Naive thymus-derived CD4-positive, alpha-beta T cell (primary cell): ENCODE measurements at regions of chrX and their contacts with region 1.

Region 1: DNA sequence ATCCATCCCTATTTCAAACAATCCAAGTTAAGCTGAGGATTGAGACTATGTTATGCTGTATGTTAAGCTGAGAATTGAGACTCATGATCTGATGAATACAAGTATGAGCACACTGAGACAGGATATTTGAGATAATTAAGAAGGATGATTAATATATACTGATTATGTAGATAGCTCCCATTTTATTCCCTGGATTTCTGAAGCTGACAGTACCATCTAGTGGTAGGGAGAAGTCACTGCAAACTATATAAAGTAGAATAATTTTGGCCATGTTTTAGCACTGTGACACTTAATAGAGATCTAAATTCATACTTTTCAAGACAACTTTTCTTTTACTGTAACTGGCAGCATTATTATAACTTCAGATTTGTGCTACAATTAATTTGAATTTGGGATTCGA is 63.8 kb upstream of the HPRT1 start:
- DNase-seq: peak in 2 of 9 donors; percentile 1 to 18
- ATAC-seq: no peak
- H3K4me3 ChIP-seq: no peak overlapping the region
- H3K4me3 Mint-ChIP-seq: no peak overlapping the region
- H3K27ac ChIP-seq: no peak overlapping the region
- H3K27ac Mint-ChIP-seq: no peak overlapping the region
- H3K4me1 ChIP-seq: no peaks in the 10 kb centered on the region
- H3K4me1 Mint-ChIP-seq: peaks cover 0 to 15% (median 5%) of the 10 kb centered on the region in 7 donors
- H3K27me3 ChIP-seq: no peaks in the 10 kb centered on the region
- H3K27me3 Mint-ChIP-seq: no peaks in the 10 kb centered on the region

Region 2: GRCh38 chrX:133921764-133922389 is 474.3 kb before region 1 on chrX:
- CTCF ChIA-PET with region 1: no interaction called
- POLR2A ChIA-PET with region 1: no interaction called
- intact Hi-C with region 1: loop called in 1 of 2 experiments (anchors 5 kb)
- DNase-seq: peak in 5 of 9 donors; percentile 7 to 33 (median 22)
- ATAC-seq: no peak
- H3K4me3 ChIP-seq: peak overlapping the region; percentile 24
- H3K4me3 Mint-ChIP-seq: peak overlapping the region in 5 of 10 donors; percentile 7 to 90 (median 83)
- H3K27ac ChIP-seq: no peak overlapping the region
- H3K27ac Mint-ChIP-seq: peak overlapping the region in 7 of 9 donors; percentile 38 to 95 (median 92)
- H3K4me1 ChIP-seq: peaks cover 13 to 17% of the 10 kb centered on the region in 2 donors
- H3K4me1 Mint-ChIP-seq: peaks cover 4 to 39% (median 26%) of the 10 kb centered on the region in 7 donors
- H3K27me3 ChIP-seq: no peaks in the 10 kb centered on the region
- H3K27me3 Mint-ChIP-seq: no peaks in the 10 kb centered on the region

Region 3: GRCh38 chrX:134377537-134377936 is 18.6 kb before region 1 on chrX:
- CTCF ChIA-PET with region 1: interaction called, 5 read pairs
- POLR2A ChIA-PET with region 1: no interaction called
- intact Hi-C with region 1: loop called (anchors 1 kb)
- DNase-seq: peak in 1 of 9 donors; percentile 9
- ATAC-seq: no peak
- H3K4me3 ChIP-seq: no peak overlapping the region
- H3K4me3 Mint-ChIP-seq: no peak overlapping the region
- H3K27ac ChIP-seq: no peak overlapping the region
- H3K27ac Mint-ChIP-seq: no peak overlapping the region
- H3K4me1 ChIP-seq: peaks cover 2 to 4% of the 10 kb centered on the region in 2 donors
- H3K4me1 Mint-ChIP-seq: peaks cover 3 to 24% (median 13%) of the 10 kb centered on the region in 7 donors
- H3K27me3 ChIP-seq: no peaks in the 10 kb centered on the region
- H3K27me3 Mint-ChIP-seq: no peaks in the 10 kb centered on the region

Region 4: GRCh38 chrX:135547767-135548166 is 1151.6 kb after region 1 on chrX:
- CTCF ChIA-PET with region 1: no interaction called
- POLR2A ChIA-PET with region 1: no interaction called
- intact Hi-C with region 1: no loop called
- DNase-seq: no peak
- ATAC-seq: no peak
- H3K4me3 ChIP-seq: no peak overlapping the region
- H3K4me3 Mint-ChIP-seq: no peak overlapping the region
- H3K27ac ChIP-seq: no peak overlapping the region
- H3K27ac Mint-ChIP-seq: no peak overlapping the region
- H3K4me1 ChIP-seq: peaks cover 7 to 8% of the 10 kb centered on the region in 2 donors
- H3K4me1 Mint-ChIP-seq: peaks cover 14 to 30% (median 23%) of the 10 kb centered on the region in 7 donors
- H3K27me3 ChIP-seq: no peaks in the 10 kb centered on the region
- H3K27me3 Mint-ChIP-seq: no peaks in the 10 kb centered on the region